ENCODE measurements at regions of chr17 and their contacts with region 1.

Region 1: DNA sequence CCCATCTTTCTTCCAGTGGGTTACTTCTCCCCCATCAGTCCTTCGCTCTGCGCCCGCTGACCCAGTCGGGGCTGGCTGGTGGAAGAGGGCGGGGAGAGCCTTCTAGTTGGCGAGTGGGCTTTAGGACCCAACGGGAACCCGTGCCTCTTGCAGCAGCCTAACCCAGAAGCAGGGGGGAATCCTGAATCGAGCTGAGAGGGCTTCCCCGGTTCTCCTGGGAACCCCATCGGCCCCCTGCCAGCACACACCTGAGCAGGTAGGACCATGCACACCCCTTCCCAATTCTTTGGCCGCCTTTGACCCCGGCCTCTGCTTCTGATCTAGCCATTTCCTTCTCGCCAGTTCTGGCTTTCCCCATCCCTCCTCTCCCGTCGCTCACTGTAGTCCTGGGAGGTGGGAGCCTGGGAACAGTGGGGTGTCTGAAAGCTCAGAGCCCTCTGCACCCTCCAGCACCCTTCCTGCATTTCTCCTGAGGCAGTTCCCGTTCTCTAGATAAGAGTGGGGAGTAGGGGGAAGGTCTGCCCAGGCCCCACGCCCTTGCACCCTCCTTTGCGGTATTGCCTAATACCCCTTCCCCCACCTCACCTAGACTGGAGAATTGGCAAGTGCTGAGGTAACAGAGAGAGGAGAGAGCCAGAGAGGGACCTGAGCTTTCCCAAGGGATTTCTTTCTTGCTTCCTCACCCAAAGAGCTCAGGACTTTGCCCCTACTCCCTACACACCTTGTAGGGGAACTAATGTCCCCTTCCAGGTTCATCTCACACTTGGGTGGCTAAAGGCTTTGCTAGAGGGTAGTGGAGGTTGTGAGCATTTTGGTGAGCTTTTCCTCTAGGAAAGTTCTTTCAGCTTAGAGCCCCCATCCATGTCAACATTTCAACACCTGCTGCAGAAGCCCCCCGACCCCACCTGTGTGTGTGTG is at the start of gene RARA:
- DNase-seq: peak; percentile 24 to 71 (median 55)
- ATAC-seq: peak; percentile 26 to 60 (median 42)
- H3K4me3 ChIP-seq: peak within 1 kb of the TSS; percentile 18 to 51 (median 21)
- H3K27ac ChIP-seq: peak within 1 kb of the TSS in 2 of 3 donors; percentile 13 to 37
- H3K4me1 ChIP-seq: peaks cover 0 to 56% (median 28%) of the 10 kb centered on the region in 4 donors
- H3K27me3 ChIP-seq: no peaks in the 10 kb centered on the region
- CTCF ChIP-seq: no peak
- POLR2A ChIP-seq: no peak
- total RNA-seq, gene RARA: 17.7 to 41.9 (median 22.9) TPM

Region 2: GRCh38 chr17:40139566-40140058 is 169.7 kb before region 1 on chr17:
- intact Hi-C with region 1: no loop called
- DNase-seq: peak in 1 of 3 donors; percentile 56
- ATAC-seq: peak; percentile 12 to 19 (median 13)
- H3K4me3 ChIP-seq: peak overlapping the region; percentile 36 to 67 (median 54)
- H3K27ac ChIP-seq: peak overlapping the region; percentile 86 to 98 (median 95)
- H3K4me1 ChIP-seq: peaks cover 0 to 13% (median 5%) of the 10 kb centered on the region in 4 donors
- H3K27me3 ChIP-seq: no peaks in the 10 kb centered on the region
- CTCF ChIP-seq: no peak
- POLR2A ChIP-seq: no peak

Region 3: DNA sequence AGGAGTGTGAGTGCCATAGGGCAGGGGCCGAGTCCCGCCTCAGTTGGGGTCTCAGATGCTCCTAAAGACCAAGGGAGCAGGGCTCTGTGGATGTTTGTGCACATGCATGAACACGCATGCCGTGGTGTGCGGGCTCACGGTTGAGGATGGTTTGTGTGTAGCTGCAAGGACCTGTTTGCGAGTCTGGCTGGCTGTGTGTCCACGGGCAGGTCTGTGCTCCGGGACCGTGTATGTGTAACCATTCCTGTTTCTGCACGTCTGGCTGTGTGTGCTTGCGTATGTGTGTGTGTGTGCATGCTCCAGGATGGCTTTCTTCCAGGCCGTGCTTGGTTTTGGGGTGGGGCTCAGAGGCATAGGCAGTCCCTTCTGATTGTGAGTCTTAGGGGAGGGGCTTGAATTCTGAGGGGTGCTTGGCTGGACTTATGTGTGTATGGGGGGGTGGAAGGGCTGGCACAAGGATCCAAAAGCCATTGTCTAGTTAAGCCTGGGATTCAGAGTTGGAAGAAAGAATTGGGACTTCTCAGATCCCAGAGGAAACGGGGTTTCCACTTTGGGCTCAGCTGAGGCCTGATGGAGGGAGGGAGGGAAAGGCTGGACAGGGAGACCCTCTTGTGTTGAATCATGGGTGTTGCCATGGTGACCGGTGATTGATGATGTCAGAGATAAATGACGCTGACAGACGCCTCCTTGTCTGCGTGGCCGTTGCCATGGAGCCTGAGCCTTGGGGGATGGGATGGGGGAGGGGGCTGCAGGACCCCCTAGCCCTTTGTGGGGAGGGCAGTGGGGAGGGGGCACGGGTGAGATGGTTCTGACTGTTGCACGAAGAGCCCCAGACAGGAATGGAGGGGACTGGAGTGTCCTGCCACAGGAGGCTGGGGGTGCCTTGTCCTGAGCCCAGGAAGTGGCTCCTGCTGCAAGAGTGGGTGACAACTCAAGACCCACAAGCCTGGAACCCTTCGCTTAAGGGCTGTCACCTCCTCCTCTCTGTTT is 40.9 kb after region 1 on chr17:
- intact Hi-C with region 1: loop called (anchors 5 kb)
- DNase-seq: peak in 2 of 3 donors; percentile 37 to 64
- ATAC-seq: no peak
- H3K4me3 ChIP-seq: no peak overlapping the region
- H3K27ac ChIP-seq: peak overlapping the region in 1 of 3 donors; percentile 40
- H3K4me1 ChIP-seq: peaks cover 9 to 99% (median 52%) of the 10 kb centered on the region in 4 donors
- H3K27me3 ChIP-seq: no peaks in the 10 kb centered on the region
- CTCF ChIP-seq: no peak
- POLR2A ChIP-seq: no peak

Measured in right lobe of liver (tissue), 6 donors.